ENCODE measurements at regions of chr6 and their contacts with region 1.

Region 1: DNA sequence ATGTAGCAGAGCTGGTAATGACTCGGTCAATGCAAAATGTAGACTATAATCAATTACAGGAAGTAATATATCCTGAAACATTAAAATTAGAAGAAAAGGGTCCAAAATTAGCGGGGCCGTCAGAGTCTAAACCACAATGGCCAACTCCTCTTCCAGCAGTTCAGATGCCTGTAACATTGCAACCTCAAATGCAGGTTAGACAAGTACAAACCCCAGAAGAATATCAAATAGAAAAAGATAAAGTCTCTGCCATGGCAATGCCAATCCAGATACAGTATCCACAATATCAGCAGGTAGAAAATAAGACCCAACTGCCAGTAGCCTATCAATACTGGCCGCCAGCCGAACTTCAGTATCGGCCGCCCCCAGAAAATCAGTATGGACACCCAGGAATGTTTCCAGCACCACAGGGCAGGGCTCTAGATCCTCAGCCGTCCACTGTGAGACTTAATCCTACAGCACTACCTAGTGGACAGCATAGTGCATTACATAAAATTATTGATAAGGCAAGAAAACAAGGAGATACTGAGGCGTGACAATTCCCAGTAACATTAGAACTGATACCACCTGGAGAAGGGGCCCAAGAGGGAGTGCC is 158.4 kb downstream of the GPX5 start:
- DNase-seq: peak; percentile 46
- H3K4me3 ChIP-seq: peak overlapping the region in 1 of 3 experiments; percentile 9
- H3K27ac ChIP-seq: no peak overlapping the region
- H3K4me1 ChIP-seq: peaks cover 8% of the 10 kb centered on the region
- H3K27me3 ChIP-seq: no peaks in the 10 kb centered on the region
- CTCF ChIP-seq: peak; percentile 66 to 73

Region 2: DNA sequence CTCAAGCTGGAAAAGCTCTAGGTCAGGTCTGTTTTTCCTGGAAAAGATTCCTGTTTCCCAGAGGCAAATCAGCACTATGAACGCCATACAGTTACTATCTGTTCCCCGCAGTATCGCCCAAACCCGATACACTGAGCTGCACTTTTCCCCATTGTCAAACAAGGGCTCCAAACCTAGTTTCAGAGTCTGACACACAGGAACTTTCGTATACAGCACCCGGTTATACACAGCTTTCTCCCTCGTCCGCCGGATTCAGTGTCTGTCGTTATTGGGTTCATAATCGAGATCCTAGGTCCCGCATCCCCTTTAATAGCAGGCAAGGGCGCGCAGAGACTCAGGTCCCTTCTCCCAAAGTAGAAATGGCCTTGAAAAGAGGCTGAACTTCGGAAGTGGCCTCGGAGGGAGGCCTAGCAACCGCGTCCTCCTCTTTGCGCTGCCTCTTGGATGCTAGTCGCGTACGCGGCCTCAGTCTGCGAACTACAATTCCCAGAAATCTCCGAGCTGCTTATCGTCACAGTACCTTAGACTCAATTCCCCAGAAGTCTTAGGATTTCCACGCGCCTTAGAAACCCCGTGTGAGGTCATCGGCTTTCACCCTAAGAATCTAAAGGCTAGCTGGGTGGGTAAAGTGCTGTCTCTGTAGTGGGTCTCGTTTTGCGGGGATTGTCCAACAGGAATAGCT is 1261.2 kb before region 1 on chr6:
- CTCF ChIA-PET with region 1: no interaction called
- dilution Hi-C with region 1: no loop called
- in situ Hi-C with region 1: no loop called
- intact Hi-C with region 1: no loop called
- DNase-seq: no peak
- H3K4me3 ChIP-seq: no peak overlapping the region
- H3K27ac ChIP-seq: no peak overlapping the region
- H3K4me1 ChIP-seq: no peaks in the 10 kb centered on the region
- H3K27me3 ChIP-seq: no peaks in the 10 kb centered on the region
- CTCF ChIP-seq: no peak

Region 3: DNA sequence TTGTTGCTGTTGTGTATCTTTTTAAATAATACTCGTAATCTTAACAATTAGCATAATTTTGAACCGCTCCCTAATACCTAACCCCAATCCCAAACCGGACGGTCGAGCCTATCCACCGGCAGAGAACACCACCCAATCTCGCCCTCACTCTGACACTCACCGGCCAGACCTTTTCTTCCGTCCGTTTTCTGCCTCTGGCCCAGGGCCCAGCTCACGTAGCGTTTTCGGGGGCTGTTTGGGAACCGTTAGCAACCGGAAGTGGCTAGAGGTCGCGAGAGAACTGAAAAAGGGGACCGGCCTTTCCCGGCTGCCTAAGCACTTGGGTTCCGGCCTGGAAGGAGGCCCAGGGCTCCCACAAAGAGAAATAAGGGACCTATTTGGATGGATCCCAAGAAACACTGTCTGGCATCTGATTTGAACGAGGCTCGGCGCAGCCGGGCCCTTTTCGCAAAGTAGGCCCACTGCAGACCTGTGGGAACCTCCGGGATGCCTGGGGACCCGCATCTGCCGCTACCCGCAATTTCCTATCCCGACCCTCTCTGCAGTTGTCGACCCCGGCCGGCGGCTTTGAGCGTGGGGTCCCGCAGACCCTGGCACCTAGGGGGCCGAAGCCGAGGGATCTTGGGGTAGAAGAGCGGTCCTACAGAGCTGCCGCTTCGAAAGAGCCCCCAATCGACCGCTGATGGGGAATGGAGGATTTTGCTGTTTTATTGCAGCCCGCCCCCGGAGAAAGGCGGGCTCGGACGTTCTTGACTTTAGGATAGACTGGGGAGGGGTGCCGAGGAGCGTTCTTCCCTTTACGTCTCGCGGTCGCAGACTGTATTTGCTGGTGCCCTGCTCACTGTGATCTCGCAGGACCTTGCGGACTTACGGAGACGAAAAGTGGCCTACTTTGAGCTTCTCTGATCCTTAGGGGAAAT is 547.2 kb before region 1 on chr6:
- CTCF ChIA-PET with region 1: no interaction called
- dilution Hi-C with region 1: no loop called
- in situ Hi-C with region 1: no loop called
- intact Hi-C with region 1: loop called (anchors 1 kb)
- DNase-seq: peak; percentile 89
- H3K4me3 ChIP-seq: peak overlapping the region; percentile 63 to 90 (median 90)
- H3K27ac ChIP-seq: peak overlapping the region; percentile 63
- H3K4me1 ChIP-seq: peaks cover 20% of the 10 kb centered on the region
- H3K27me3 ChIP-seq: no peaks in the 10 kb centered on the region
- CTCF ChIP-seq: no peak

Region 4: DNA sequence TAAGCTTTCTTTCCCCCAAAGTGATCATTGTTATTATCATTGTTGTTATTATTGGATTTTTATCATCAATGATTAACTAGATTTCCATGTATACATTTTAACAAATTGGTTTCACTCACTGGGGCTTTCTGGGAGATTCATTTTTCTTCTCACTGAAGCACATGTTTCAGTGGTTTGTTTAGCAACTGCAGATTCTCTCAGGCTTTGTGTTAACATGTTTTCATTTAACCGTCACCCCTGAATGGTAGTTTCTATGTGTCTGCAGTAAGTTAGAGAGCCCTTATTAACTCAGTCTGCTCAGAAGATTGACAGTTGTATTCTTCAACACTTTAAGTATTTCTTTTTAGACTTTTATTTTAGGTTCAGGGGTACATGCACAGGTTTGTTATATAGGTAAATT is 444.4 kb before region 1 on chr6:
- CTCF ChIA-PET with region 1: no interaction called
- dilution Hi-C with region 1: no loop called
- in situ Hi-C with region 1: no loop called
- intact Hi-C with region 1: no loop called
- DNase-seq: no peak
- H3K4me3 ChIP-seq: no peak overlapping the region
- H3K27ac ChIP-seq: no peak overlapping the region
- H3K4me1 ChIP-seq: no peaks in the 10 kb centered on the region
- H3K27me3 ChIP-seq: no peaks in the 10 kb centered on the region
- CTCF ChIP-seq: no peak

Region 5: DNA sequence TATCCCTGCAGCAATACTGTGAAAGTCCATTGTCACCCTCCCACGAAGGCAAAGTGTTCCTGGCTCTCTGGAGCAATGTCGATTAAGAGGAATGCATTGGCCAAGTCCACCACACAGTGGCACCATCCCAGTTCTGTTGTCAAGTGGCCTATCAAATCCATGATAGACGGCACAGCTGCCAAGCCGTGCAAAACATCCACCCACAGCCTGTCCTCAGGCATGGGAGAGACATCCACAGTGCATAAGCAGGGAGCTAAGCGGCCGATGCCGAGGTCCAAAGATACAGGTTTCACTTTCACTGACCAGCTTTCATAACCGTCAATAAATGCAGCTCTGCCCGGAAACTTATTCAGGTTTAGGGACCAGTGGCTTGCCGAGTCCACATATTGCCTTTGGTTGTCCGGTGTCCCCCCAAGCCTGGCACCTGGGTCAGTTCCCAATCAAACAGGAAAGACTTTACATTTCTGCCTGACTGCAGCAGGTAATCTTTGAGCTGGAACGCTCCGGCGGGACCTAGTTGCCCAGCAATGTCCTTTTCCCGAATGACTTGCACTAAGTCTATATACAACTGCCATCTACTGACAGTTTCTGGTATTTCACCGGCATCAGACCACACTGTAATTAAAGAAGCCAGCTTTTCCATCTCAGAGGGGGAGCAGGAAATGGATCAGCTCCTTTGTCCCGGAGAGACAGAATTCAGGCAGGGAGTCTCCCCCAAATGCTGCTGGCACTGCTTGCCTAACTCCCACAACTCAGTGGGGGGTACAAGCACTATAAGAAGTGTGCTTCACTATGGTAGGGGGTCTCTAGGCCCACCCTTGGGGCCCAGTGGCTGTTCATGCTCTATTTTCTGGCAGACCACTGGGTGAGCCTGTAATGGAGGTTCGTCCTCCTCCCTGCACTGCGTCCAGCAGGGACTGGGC is 328.0 kb before region 1 on chr6:
- CTCF ChIA-PET with region 1: no interaction called
- dilution Hi-C with region 1: no loop called
- in situ Hi-C with region 1: no loop called
- intact Hi-C with region 1: loop called (anchors 1 kb)
- DNase-seq: peak; percentile 77
- H3K4me3 ChIP-seq: peak overlapping the region; percentile 50 to 60 (median 59)
- H3K27ac ChIP-seq: peak overlapping the region; percentile 49
- H3K4me1 ChIP-seq: peaks cover 16% of the 10 kb centered on the region
- H3K27me3 ChIP-seq: no peaks in the 10 kb centered on the region
- CTCF ChIP-seq: peak; percentile 73 to 78

Region 6: DNA sequence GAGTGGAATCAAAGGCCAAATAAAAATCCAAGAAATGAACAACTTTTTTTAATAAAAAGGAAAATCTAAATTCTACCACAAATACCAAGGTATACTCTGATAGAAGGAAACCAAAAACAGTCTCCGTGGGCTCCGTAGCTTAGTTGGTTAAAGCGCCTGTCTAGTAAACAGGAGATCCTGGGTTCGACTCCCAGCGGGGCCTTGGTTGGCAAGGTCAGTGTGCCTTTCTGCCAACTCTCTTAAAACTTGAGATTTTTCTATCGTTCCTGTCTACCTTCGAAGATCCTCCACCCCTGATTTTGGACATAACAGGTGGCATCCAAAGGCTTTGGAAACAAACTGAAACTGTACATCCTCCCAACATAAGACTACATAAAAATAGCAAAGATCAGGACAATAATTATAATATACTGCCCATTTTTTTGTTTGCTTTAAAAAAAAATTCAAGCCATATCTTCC is 41.9 kb after region 1 on chr6:
- CTCF ChIA-PET with region 1: no interaction called
- dilution Hi-C with region 1: no loop called
- in situ Hi-C with region 1: no loop called
- intact Hi-C with region 1: loop called (anchors 2 kb)
- DNase-seq: peak; percentile 71
- H3K4me3 ChIP-seq: no peak overlapping the region
- H3K27ac ChIP-seq: no peak overlapping the region
- H3K4me1 ChIP-seq: no peaks in the 10 kb centered on the region
- H3K27me3 ChIP-seq: no peaks in the 10 kb centered on the region
- CTCF ChIP-seq: no peak

Region 7: GRCh38 chr6:28816909-28817807 is 133.1 kb after region 1 on chr6:
- CTCF ChIA-PET with region 1: no interaction called
- dilution Hi-C with region 1: no loop called
- in situ Hi-C with region 1: no loop called
- intact Hi-C with region 1: loop called (anchors 2 kb)
- DNase-seq: peak; percentile 85
- H3K4me3 ChIP-seq: peak overlapping the region; percentile 22 to 48 (median 35)
- H3K27ac ChIP-seq: no peak overlapping the region
- H3K4me1 ChIP-seq: peaks cover 7% of the 10 kb centered on the region
- H3K27me3 ChIP-seq: no peaks in the 10 kb centered on the region
- CTCF ChIP-seq: no peak

Measured in mammary epithelial cell (primary cell).